Activated CD4-positive, alpha-beta T cell treated with anti-CD3 and anti-CD28 coated beads, Interleukin-2, amount 10 ng/mL, durations not matched to agents 24 days and 14 days (primary cell): ENCODE measurements at regions of chr3 and their contacts with region 1.

Region 1: DNA sequence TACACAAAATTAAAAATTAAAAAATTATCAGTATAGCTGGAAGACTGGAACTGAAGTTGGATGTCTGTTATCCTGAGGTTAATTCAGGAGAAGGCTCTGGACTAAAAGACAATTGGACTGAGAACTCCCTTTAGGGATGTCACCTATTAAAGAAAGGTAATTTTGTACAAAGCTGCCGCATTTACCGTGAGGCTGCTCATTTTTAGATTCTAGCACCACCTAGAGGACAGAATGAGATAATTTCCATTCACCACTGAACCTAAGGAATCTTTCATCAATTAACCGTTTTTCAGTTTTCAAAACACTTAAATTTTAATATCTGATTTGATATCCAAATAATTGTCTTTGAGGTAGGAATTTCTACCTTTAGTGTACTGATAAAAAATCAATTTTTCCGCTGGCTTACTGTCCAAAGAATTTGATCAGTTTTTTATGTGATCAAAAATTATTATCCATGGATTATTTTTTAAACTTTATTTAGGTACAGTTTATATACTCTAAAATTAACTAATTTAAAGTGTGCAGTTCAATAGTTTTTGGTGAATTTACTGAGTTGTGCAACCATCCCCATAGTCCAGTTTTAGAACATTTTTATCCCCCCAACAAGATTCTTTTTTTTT is 106.7 kb upstream of the TNIK start:
- DNase-seq: peak; percentile 75
- H3K4me3 Mint-ChIP-seq: no peak overlapping the region
- H3K27ac Mint-ChIP-seq: no peak overlapping the region
- H3K4me1 Mint-ChIP-seq: peaks cover 18% of the 10 kb centered on the region
- H3K27me3 Mint-ChIP-seq: peaks cover 21% of the 10 kb centered on the region

Region 2: DNA sequence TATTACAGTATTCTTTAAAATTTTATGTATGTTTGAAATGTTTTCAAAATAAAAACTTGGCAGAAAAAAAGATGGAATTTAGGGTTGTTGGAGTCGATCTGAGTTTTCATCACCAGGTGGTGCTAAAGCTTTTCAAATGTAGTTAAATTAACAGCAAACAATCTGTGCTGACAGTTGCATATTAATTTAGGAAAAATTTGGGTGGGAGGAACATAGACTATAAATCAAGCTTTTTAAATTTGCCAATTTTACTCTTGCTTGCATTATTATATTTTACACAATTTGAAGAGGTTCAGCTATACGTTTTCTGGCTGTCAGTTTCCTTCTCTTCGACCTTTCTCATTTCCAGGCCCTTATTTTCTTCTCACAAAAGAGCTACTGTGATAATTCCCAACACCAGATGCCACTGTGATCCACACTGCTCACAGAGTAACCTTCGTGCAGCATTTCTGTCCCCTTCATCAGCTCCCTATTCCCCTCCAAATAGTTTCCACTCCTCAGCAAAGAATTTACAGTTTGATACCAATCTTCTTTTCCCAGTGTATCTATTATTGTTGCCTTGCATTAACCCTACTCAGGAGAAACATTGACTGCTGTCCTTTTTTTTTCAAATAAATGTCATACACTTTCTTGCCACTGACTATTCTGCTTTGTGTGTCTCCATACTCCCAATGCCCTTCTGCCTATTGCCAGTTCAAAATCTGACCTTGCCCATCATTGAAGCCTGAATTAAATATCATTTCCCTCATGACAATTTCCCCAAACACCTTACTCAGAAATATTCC is 605.1 kb before region 1 on chr3:
- intact Hi-C with region 1: loop called (anchors 1 kb)
- DNase-seq: no peak
- H3K4me3 Mint-ChIP-seq: no peak overlapping the region
- H3K27ac Mint-ChIP-seq: no peak overlapping the region
- H3K4me1 Mint-ChIP-seq: no peaks in the 10 kb centered on the region
- H3K27me3 Mint-ChIP-seq: peaks cover 30% of the 10 kb centered on the region

Region 3: DNA sequence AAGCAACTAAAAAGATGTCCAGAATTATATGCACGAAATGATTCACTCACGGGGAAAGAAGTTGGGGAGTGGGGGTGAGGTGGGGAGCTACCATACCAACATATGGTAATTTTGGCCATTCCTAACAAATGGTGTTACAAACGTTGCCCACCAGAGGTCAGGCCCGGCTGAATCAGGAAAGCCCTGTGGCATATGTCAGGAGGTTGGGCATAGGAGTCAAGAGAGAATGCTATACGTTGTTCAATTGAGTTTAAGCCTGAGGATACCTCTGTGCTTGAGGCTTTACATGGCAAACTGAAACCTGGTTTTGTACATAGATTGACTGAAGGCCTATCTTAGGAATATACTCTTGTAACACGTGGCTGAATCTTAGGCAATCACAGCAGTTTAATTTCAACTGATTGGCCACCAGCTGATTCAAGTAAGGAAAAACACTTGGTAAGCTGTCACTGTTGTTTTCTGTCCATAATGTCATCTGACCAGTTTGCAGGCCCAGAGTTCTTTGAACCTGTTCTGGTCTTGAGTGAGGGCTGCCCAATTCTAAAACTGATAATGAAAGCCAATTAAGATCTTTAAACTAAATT is 517.0 kb before region 1 on chr3:
- intact Hi-C with region 1: loop called (anchors 1 kb)
- DNase-seq: peak; percentile 82
- H3K4me3 Mint-ChIP-seq: no peak overlapping the region
- H3K27ac Mint-ChIP-seq: no peak overlapping the region
- H3K4me1 Mint-ChIP-seq: peaks cover 4% of the 10 kb centered on the region
- H3K27me3 Mint-ChIP-seq: peaks cover 21% of the 10 kb centered on the region

Region 4: DNA sequence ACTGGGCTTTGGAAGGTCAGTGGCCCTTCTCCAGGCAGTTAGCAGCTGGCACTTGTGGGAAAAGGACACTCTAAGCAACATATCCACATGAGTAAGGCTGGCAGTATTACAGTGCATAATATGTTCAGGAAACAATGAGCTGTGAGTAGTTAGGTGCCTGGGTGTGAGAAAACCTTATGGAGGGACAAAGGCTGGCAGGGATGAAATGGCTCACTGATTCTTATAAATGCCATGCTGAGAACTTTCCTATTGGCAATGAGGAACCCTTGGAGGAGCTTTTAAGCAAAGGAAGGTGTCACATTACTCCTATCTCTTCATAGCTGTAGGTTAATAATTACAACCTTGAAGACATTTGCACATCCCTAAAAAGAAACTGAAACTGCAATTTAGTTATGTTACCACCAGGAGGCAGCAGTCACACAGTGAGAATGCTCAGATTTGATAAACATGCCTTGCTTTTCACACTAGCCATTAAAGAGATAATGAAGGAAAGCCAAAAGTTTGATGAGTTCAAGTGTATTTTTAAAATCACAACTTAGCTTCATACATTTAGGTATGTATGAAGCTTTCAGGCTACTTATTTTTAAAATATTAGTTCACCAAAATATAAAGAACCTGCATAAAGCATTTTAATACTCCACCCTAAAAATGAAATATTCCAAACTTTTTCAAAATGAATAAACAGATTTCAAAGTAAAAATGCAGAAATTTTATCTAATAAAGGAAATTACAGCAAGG is 403.8 kb before region 1 on chr3:
- intact Hi-C with region 1: loop called (anchors 1 kb)
- DNase-seq: peak; percentile 70
- H3K4me3 Mint-ChIP-seq: no peak overlapping the region
- H3K27ac Mint-ChIP-seq: no peak overlapping the region
- H3K4me1 Mint-ChIP-seq: peaks cover 18% of the 10 kb centered on the region
- H3K27me3 Mint-ChIP-seq: no peaks in the 10 kb centered on the region

Region 5: DNA sequence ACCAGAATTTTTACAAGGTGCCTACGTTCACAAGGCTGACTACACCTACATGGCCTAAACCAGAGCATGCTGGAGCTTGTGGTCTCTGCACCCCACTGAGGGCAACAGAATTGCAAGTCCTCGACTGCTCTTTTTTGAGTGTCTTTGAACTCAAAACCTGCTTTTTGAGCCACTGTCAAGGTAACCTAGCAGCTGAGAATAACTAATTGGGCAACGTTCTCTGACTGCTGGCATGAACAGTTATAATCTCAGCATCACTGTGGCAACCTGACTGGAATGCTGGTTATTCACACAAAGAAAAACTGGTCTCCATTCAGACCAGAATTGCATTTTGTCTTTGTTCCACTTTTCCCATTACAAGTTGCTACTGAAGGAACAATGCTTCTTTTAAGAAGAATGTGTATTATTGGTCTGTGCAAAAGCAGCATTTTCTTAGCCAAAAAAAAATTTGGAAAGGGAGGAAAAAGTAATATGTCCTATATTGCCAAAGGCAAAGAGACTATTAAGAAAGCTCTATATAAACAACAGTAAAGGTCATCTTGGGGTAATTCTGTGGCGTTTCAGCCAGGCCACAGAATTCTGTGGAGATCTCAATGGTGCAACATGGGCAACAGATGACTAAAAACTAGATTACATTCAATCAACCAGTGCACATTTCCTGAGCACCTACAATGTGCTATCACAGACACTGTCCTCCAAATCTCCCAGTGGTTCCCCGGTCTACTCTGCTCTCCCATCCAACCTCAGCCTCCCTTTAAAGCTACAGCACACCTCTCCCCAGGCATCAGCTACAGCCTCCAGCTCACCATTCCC is 183.5 kb before region 1 on chr3:
- intact Hi-C with region 1: no loop called
- DNase-seq: no peak
- H3K4me3 Mint-ChIP-seq: no peak overlapping the region
- H3K27ac Mint-ChIP-seq: no peak overlapping the region
- H3K4me1 Mint-ChIP-seq: peaks cover 12% of the 10 kb centered on the region
- H3K27me3 Mint-ChIP-seq: no peaks in the 10 kb centered on the region

Region 6: GRCh38 chr3:171417813-171418212 is 149.1 kb before region 1 on chr3:
- intact Hi-C with region 1: no loop called
- DNase-seq: no peak
- H3K4me3 Mint-ChIP-seq: no peak overlapping the region
- H3K27ac Mint-ChIP-seq: no peak overlapping the region
- H3K4me1 Mint-ChIP-seq: peaks cover 9% of the 10 kb centered on the region
- H3K27me3 Mint-ChIP-seq: no peaks in the 10 kb centered on the region

Region 7: DNA sequence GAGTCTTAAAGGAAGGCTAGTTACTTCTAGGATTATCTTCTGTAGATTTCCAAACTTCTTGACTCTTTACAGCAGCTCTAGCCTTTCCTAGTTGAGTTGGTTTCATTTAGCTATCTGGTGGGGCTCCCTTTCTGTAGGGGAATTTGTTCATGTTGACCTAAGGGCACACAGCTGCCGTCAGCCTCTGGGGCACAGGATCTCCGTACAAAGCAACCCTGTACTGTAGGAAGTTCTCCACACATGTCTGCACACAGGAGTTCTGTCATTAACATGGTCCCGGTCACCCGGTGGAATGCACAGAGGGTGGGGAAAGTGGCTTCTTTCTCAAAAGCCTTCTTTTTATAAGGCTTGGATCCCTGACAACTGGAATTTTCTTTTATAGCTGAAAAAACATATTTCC is 18.0 kb before region 1 on chr3:
- intact Hi-C with region 1: no loop called
- DNase-seq: no peak
- H3K4me3 Mint-ChIP-seq: no peak overlapping the region
- H3K27ac Mint-ChIP-seq: no peak overlapping the region
- H3K4me1 Mint-ChIP-seq: peaks cover 13% of the 10 kb centered on the region
- H3K27me3 Mint-ChIP-seq: no peaks in the 10 kb centered on the region